Endothelial cell of umbilical vein (primary cell): ENCODE measurements at regions of chr3 and their contacts with region 1.

Region 1: GRCh38 chr3:132034486-132035464 is at the start of gene CPNE4:
- DNase-seq: peak; percentile 60
- H3K4me3 ChIP-seq: no peak within 1 kb of the TSS
- H3K27ac ChIP-seq: no peak within 1 kb of the TSS
- H3K4me1 ChIP-seq: no peaks in the 10 kb centered on the region
- H3K27me3 ChIP-seq: peaks cover 25 to 31% of the 10 kb centered on the region in 2 experiments
- CTCF ChIP-seq: peak; percentile 87 to 95
- POLR2A ChIP-seq: no peak
- total RNA-seq, gene CPNE4: not detected in 2 replicates

Region 2: GRCh38 chr3:131714585-131715220 is 320.1 kb before region 1 on chr3:
- CTCF ChIA-PET with region 1: no interaction called
- POLR2A ChIA-PET with region 1: no interaction called
- dilution Hi-C with region 1: no loop called
- intact Hi-C with region 1: no loop called
- DNase-seq: no peak
- H3K4me3 ChIP-seq: no peak overlapping the region
- H3K27ac ChIP-seq: no peak overlapping the region
- H3K4me1 ChIP-seq: no peaks in the 10 kb centered on the region
- H3K27me3 ChIP-seq: peaks cover 0 to 8% of the 10 kb centered on the region in 2 experiments
- CTCF ChIP-seq: no peak
- POLR2A ChIP-seq: no peak

Region 3: GRCh38 chr3:132006605-132007204 is 28.1 kb before region 1 on chr3:
- CTCF ChIA-PET with region 1: interaction called, 42 read pairs
- POLR2A ChIA-PET with region 1: no interaction called
- dilution Hi-C with region 1: no loop called
- intact Hi-C with region 1: no loop called
- DNase-seq: peak; percentile 50
- H3K4me3 ChIP-seq: no peak overlapping the region
- H3K27ac ChIP-seq: no peak overlapping the region
- H3K4me1 ChIP-seq: no peaks in the 10 kb centered on the region
- H3K27me3 ChIP-seq: peaks cover 5 to 8% of the 10 kb centered on the region in 2 experiments
- CTCF ChIP-seq: peak; percentile 58 to 65
- POLR2A ChIP-seq: no peak

Region 4: DNA sequence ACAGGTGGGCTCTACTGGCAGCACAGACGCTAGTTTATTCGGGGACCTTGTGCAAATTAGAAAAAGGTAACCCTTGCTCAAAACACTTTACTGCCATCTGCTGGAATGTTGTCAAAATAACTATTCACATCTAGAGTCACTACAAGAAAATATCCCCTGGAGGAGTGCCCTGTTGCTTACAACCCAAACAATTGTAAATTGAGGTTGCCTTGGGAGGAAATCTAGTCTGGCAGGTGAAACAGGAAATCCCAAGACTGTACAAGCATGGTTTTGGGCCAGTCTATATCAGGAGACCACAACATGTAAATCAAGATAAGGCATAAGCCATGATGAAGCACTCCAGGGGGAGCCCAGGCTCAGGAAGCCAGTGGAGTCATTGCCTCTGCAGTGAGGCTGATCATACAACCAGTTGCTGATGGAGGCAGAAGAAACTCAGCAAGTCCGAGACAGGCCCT is 145.6 kb after region 1 on chr3:
- CTCF ChIA-PET with region 1: interaction called, 163 read pairs
- POLR2A ChIA-PET with region 1: no interaction called
- dilution Hi-C with region 1: no loop called
- intact Hi-C with region 1: loop called (anchors 1 kb)
- DNase-seq: peak; percentile 62
- H3K4me3 ChIP-seq: no peak overlapping the region
- H3K27ac ChIP-seq: no peak overlapping the region
- H3K4me1 ChIP-seq: no peaks in the 10 kb centered on the region
- H3K27me3 ChIP-seq: peaks cover 9 to 22% of the 10 kb centered on the region in 2 experiments
- CTCF ChIP-seq: peak; percentile 37 to 42
- POLR2A ChIP-seq: no peak

Region 5: DNA sequence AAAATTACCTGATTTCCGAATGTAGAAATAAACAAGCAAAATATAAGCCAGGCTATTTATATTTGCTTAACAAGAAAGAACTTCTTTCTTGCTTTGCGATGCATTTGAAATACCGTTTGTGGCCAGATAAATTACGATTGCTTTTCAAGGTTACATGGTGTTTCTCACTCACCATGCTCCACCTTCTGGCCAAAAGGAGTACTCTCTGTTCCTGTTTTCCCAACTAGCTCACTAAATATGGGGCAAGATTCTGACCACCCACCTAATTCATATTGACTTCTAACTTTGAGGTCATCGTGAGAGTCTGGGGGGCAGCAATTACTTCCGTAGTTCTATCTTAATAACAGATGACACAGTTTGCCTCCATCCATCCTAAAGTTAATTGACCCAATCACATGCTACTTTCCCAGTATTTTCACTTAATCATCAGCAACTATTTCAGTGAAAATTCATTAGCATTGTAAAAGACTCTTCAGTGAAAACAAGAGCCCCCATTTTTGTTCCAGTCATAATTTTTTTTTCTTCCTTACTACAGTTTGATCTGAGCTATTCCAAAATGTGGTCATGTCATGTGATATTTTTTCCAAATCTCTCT is 308.3 kb after region 1 on chr3:
- CTCF ChIA-PET with region 1: interaction called, 14 read pairs
- POLR2A ChIA-PET with region 1: no interaction called
- dilution Hi-C with region 1: no loop called
- intact Hi-C with region 1: no loop called
- DNase-seq: peak; percentile 56
- H3K4me3 ChIP-seq: no peak overlapping the region
- H3K27ac ChIP-seq: no peak overlapping the region
- H3K4me1 ChIP-seq: no peaks in the 10 kb centered on the region
- H3K27me3 ChIP-seq: peaks cover 10 to 17% of the 10 kb centered on the region in 2 experiments
- CTCF ChIP-seq: peak; percentile 57 to 69
- POLR2A ChIP-seq: no peak